GM12878 (cell line): ENCODE measurements at regions of chr5 and their contacts with region 1.

Region 1: DNA sequence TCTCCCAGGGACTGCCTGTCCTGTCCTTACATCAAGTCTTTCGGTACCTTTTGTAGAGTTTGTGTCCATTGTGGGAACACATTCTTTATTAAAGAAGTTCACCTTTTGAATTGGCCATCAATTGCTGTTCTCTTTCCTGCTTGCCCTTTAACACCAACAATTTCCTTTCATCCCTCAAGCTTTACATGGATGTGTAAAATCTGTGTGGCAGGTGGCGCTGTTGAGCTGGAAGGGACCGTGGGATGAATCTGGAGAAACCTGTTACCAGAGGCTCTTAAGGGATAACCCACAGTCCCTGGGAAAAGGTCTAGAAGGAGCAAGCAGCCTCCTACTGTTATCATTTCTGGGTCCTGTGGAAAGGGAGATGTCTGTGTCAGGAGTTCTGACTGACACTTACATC is 7.9 kb upstream of the ZFP62 start:
- DNase-seq: peak; percentile 61
- ATAC-seq: peak; percentile 80
- H3K4me3 ChIP-seq: no peak overlapping the region
- H3K27ac ChIP-seq: peak overlapping the region; percentile 32; the same call in 1 of the 2 replicates
- H3K4me1 ChIP-seq: peaks cover 17% of the 10 kb centered on the region
- H3K27me3 ChIP-seq: no peaks in the 10 kb centered on the region
- CTCF ChIP-seq: peak; percentile 73 to 86 (median 81)
- EP300 ChIP-seq: no peak
- POLR2A ChIP-seq: no peak
- RAD21 ChIP-seq: peak; percentile 83

Region 2: DNA sequence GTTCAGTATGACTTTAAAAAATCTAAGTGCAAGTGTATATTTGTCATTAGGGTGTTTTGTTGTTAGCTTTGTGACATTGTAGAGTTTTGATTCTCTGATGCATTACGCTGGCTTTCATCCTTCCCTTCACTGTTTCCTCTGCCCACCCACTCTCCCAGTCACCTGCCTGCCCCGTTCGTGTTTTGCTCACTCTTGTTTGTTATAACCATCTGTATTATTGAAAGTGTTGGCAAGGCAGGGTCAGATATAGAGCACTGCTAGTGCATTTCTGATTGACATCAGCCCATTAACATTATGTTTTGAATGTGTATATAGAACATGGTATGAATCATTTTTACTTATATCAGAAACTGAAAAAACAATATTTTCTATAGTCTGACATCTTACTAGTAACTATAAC is 305.0 kb before region 1 on chr5:
- CTCF ChIA-PET with region 1: no interaction called
- POLR2A ChIA-PET with region 1: no interaction called
- RAD21 ChIA-PET with region 1: no interaction called
- SMC1A ChIA-PET with region 1: no interaction called
- in situ Hi-C with region 1: no loop called
- intact Hi-C with region 1: no loop called
- DNase-seq: peak; percentile 12
- ATAC-seq: peak; percentile 40
- H3K4me3 ChIP-seq: no peak overlapping the region
- H3K27ac ChIP-seq: peak overlapping the region; percentile 20
- H3K4me1 ChIP-seq: peaks cover 23% of the 10 kb centered on the region
- H3K27me3 ChIP-seq: no peaks in the 10 kb centered on the region
- CTCF ChIP-seq: no peak
- EP300 ChIP-seq: no peak
- POLR2A ChIP-seq: no peak
- RAD21 ChIP-seq: no peak

Region 3: DNA sequence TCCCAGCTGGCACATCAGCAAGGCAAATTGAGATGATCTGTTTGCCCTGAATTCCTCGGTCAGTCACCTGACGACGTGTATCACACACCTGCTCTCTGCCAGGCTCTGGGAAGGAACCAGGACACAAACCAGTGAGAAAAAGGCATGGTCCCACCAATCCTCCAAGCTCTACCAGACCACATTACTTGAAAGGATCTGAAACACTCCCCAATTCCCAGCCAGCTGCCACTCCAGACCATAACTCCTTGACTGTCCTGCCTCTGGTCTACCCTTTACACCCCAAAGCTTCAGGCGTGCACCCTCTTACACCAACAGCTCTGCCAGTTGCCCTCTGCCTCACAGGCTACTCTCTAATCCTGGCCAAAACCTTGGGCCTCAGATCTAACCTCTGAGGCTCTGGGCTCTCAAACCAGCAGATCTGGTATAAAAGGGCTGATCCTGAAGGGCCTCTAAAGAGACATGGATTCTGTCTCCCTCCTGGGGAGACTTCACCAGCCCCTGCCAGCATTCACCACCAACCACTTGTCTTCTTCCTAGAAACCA is 73.1 kb before region 1 on chr5:
- CTCF ChIA-PET with region 1: interaction called, 12 read pairs
- POLR2A ChIA-PET with region 1: no interaction called
- RAD21 ChIA-PET with region 1: interaction called, 3 read pairs
- SMC1A ChIA-PET with region 1: interaction called, 3 read pairs
- in situ Hi-C with region 1: loop called (anchors 5 kb)
- intact Hi-C with region 1: no loop called
- DNase-seq: no peak
- ATAC-seq: no peak
- H3K4me3 ChIP-seq: no peak overlapping the region
- H3K27ac ChIP-seq: no peak overlapping the region
- H3K4me1 ChIP-seq: peaks cover 18% of the 10 kb centered on the region
- H3K27me3 ChIP-seq: no peaks in the 10 kb centered on the region
- CTCF ChIP-seq: no peak
- EP300 ChIP-seq: no peak
- POLR2A ChIP-seq: no peak
- RAD21 ChIP-seq: no peak

Region 4: GRCh38 chr5:180975338-180975737 is 106.4 kb after region 1 on chr5:
- CTCF ChIA-PET with region 1: interaction called, 14 read pairs
- POLR2A ChIA-PET with region 1: interaction called, 4 read pairs
- RAD21 ChIA-PET with region 1: interaction called, 12 read pairs
- SMC1A ChIA-PET with region 1: interaction called, 11 read pairs
- in situ Hi-C with region 1: no loop called
- intact Hi-C with region 1: no loop called
- DNase-seq: peak; percentile 83
- ATAC-seq: peak; percentile 99
- H3K4me3 ChIP-seq: no peak overlapping the region
- H3K27ac ChIP-seq: peak overlapping the region; percentile 33; the same call in 1 of the 2 replicates
- H3K4me1 ChIP-seq: peaks cover 12% of the 10 kb centered on the region
- H3K27me3 ChIP-seq: no peaks in the 10 kb centered on the region
- CTCF ChIP-seq: no peak
- EP300 ChIP-seq: peak; percentile 22 to 27; a peak in 2 of 4 replicates
- POLR2A ChIP-seq: no peak
- RAD21 ChIP-seq: no peak

Region 5: DNA sequence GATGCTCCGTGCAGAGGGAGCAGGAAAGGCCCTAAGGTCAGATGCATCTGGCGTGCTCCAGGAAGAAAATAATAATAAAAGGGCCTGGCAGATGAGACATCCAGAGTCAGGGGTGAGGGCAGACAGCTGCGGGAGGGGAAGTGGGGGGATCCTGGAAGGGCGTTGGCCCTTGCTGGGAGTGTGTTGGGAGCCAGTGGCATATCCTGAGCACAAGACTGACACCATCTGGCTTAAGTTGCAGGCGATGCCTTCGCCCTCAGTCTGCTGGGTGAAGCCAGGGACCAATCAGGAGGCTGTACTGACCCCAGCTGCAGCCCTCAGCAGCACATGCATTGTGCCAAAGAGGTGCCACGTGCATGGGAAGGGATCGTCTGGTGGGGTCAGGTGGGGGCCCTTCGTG is 282.2 kb after region 1 on chr5:
- CTCF ChIA-PET with region 1: interaction called, 14 read pairs
- POLR2A ChIA-PET with region 1: no interaction called
- RAD21 ChIA-PET with region 1: interaction called, 16 read pairs
- SMC1A ChIA-PET with region 1: interaction called, 16 read pairs
- in situ Hi-C with region 1: no loop called
- intact Hi-C with region 1: no loop called
- DNase-seq: no peak
- ATAC-seq: peak; percentile 40
- H3K4me3 ChIP-seq: no peak overlapping the region
- H3K27ac ChIP-seq: no peak overlapping the region
- H3K4me1 ChIP-seq: 0 out of 2 replicates have a peak, but pooled peaks cover 6% of the 10 kb centered on the region
- H3K27me3 ChIP-seq: no peaks in the 10 kb centered on the region
- CTCF ChIP-seq: peak in 1 of 3 experiments; percentile 19; a peak in 1 of 6 replicates
- EP300 ChIP-seq: no peak
- POLR2A ChIP-seq: no peak
- RAD21 ChIP-seq: no peak

Region 6: GRCh38 chr5:181167814-181168488 is 299.0 kb after region 1 on chr5:
- CTCF ChIA-PET with region 1: interaction called, 24 read pairs
- POLR2A ChIA-PET with region 1: interaction called, 3 read pairs
- RAD21 ChIA-PET with region 1: interaction called, 14 read pairs
- SMC1A ChIA-PET with region 1: interaction called, 17 read pairs
- in situ Hi-C with region 1: no loop called
- intact Hi-C with region 1: no loop called
- DNase-seq: no peak
- ATAC-seq: peak; percentile 43
- H3K4me3 ChIP-seq: no peak overlapping the region
- H3K27ac ChIP-seq: no peak overlapping the region
- H3K4me1 ChIP-seq: peaks cover 32% of the 10 kb centered on the region
- H3K27me3 ChIP-seq: no peaks in the 10 kb centered on the region
- CTCF ChIP-seq: peak; percentile 54 to 61 (median 54)
- EP300 ChIP-seq: no peak
- POLR2A ChIP-seq: no peak
- RAD21 ChIP-seq: peak; percentile 26; the same call in 1 of the 2 replicates